IMR-90 (cell line): ENCODE measurements at regions of chrX and their contacts with region 1.

Region 1: DNA sequence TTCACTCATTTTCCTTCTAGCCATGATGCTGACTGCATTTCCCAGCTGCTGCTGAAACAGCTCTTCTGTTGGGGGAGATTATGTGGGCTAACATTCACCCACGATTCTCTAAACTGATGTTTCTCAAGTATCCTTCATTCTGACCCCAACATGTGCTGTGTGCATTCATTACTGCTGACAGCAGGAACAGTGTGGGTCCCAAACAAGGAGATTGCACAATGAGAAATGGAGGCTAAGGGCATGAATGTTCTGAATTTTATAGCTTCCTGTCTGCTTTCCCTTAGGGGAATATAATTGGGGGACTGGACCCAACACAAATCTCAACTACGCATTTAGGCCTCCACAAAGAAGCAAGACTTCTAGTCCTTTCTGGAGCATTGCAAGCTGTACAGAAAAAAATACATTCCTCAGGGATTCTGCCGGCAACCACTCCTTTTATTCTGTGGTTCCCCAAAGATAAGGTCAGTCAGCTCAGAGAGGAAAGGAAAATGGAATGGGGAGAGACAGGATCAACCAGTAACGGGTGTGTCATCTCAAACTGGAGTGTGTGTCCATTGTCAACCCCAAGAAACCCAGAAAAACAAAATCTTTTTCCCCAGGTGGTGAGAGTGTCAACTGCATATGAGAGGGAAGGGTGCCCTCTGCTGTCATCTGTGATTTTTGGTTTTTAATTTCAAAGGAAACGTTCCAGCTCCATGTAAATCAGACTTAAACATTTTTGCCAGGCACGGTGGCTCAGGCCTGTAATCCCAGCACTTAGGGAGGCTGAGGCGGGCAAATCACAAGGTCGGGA is 81.5 kb upstream of the EGFL6 start:
- DNase-seq: peak; percentile 88
- ATAC-seq: peak; percentile 77
- H3K4me3 ChIP-seq: no peak overlapping the region
- H3K27ac ChIP-seq: peak overlapping the region; percentile 97
- H3K4me1 ChIP-seq: peaks cover 2% of the 10 kb centered on the region; the same call in 1 of the 2 replicates
- H3K27me3 ChIP-seq: no peaks in the 10 kb centered on the region
- CTCF ChIP-seq: peak; percentile 77
- POLR2A ChIP-seq: no peak
- RAD21 ChIP-seq: peak; percentile 86

Region 2: GRCh38 chrX:12946838-12947544 is 540.9 kb before region 1 on chrX:
- CTCF ChIA-PET with region 1: interaction called, 21 read pairs
- POLR2A ChIA-PET with region 1: no interaction called
- dilution Hi-C with region 1: no loop called
- in situ Hi-C with region 1: no loop called
- intact Hi-C with region 1: loop called (anchors 1 kb)
- DNase-seq: peak; percentile 82
- ATAC-seq: peak; percentile 89
- H3K4me3 ChIP-seq: no peak overlapping the region
- H3K27ac ChIP-seq: peak overlapping the region; percentile 53; the same call in 1 of the 2 replicates
- H3K4me1 ChIP-seq: peaks cover 14% of the 10 kb centered on the region
- H3K27me3 ChIP-seq: no peaks in the 10 kb centered on the region
- CTCF ChIP-seq: peak; percentile 100
- POLR2A ChIP-seq: no peak
- RAD21 ChIP-seq: peak; percentile 90

Region 3: DNA sequence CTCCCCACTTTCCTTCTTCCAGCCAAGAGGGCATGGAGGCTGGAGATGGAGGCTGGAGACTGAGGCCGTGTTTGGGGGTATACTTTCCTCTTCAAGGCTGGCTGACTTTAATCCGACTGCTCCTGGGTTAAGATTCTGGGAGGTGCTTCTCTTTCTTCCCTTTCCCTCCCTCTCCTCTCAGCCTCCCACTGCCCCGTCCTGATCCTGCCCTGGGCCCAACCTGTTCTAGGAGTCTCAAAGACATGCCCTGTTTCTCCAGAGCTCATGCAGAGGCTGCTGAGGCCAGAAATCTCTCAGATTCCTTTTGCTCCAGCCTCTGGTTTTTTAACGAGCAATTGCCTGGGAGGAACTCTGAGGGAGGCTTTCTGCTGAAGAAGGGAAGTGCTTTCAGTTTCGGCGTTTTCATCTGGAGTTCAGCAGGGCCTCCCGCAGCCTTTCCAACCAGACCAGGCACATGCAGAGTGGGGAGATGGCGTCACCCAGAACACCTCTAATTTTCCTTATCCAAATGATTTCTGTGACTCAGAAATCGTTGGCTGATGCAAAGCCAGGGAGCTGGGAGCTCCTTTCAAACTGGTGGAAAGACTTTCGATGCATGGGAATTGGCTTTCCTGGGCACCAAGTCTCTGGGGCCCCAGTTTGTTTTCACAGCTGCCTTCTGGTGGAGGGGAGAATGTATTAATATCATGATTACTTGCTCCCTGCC is 409.0 kb before region 1 on chrX:
- CTCF ChIA-PET with region 1: no interaction called
- POLR2A ChIA-PET with region 1: no interaction called
- dilution Hi-C with region 1: no loop called
- in situ Hi-C with region 1: no loop called
- intact Hi-C with region 1: loop called (anchors 5 kb)
- DNase-seq: peak; percentile 81
- ATAC-seq: peak; percentile 73
- H3K4me3 ChIP-seq: no peak overlapping the region
- H3K27ac ChIP-seq: peak overlapping the region; percentile 93
- H3K4me1 ChIP-seq: peaks cover 4% of the 10 kb centered on the region
- H3K27me3 ChIP-seq: no peaks in the 10 kb centered on the region
- CTCF ChIP-seq: no peak
- POLR2A ChIP-seq: no peak
- RAD21 ChIP-seq: no peak

Region 4: DNA sequence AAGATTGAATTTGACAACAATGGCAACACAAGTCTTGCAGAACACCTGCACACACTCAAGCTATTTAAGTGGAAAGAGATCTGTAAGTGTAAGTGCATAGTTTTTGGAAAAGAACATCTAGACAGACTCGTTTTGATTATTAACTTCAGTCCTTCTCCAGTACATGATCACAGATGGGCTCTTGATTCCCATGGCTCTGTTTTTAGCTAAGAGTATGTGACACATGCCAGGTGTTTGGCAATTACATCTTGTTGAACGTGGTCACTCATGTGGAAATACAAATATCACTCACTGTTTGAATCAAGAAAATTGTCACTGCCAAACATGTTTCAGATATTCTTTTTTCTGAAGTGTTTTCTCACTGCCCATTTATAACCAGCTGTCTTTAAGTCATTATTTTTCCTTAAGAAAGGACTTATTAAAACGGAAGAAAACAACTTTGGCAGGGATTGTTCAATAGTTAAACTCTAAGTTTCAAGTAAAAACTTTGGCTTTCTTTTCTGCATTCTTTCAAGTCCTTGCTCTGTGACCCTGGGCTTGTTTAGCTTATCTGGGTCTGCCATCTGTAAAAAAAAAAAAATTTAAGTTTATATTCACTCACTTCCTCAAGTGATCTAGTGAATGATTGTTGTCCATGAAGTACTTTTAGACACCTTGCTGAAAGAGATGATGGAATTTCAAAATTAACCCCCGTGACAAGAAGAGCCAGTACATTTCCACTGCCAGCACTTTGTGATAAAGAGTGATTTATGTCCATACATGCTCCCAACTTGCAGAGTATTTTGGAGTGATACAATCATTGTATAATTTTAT is 293.4 kb before region 1 on chrX:
- CTCF ChIA-PET with region 1: no interaction called
- POLR2A ChIA-PET with region 1: no interaction called
- dilution Hi-C with region 1: no loop called
- in situ Hi-C with region 1: no loop called
- intact Hi-C with region 1: no loop called
- DNase-seq: no peak
- ATAC-seq: no peak
- H3K4me3 ChIP-seq: no peak overlapping the region
- H3K27ac ChIP-seq: no peak overlapping the region
- H3K4me1 ChIP-seq: no peaks in the 10 kb centered on the region
- H3K27me3 ChIP-seq: no peaks in the 10 kb centered on the region
- CTCF ChIP-seq: no peak
- POLR2A ChIP-seq: no peak
- RAD21 ChIP-seq: no peak

Region 5: GRCh38 chrX:13223868-13224555 is 263.9 kb before region 1 on chrX:
- CTCF ChIA-PET with region 1: interaction called, 3 read pairs
- POLR2A ChIA-PET with region 1: no interaction called
- dilution Hi-C with region 1: no loop called
- in situ Hi-C with region 1: no loop called
- intact Hi-C with region 1: loop called (anchors 10 kb)
- DNase-seq: peak; percentile 91
- ATAC-seq: peak; percentile 57
- H3K4me3 ChIP-seq: no peak overlapping the region
- H3K27ac ChIP-seq: peak overlapping the region; percentile 78
- H3K4me1 ChIP-seq: peaks cover 4% of the 10 kb centered on the region
- H3K27me3 ChIP-seq: no peaks in the 10 kb centered on the region
- CTCF ChIP-seq: no peak
- POLR2A ChIP-seq: no peak
- RAD21 ChIP-seq: no peak

Region 6: GRCh38 chrX:13376857-13377549 is 110.9 kb before region 1 on chrX:
- CTCF ChIA-PET with region 1: no interaction called
- POLR2A ChIA-PET with region 1: no interaction called
- dilution Hi-C with region 1: no loop called
- in situ Hi-C with region 1: no loop called
- intact Hi-C with region 1: loop called (anchors 1 kb)
- DNase-seq: peak; percentile 95
- ATAC-seq: peak; percentile 45
- H3K4me3 ChIP-seq: no peak overlapping the region
- H3K27ac ChIP-seq: peak overlapping the region; percentile 97
- H3K4me1 ChIP-seq: peaks cover 15% of the 10 kb centered on the region
- H3K27me3 ChIP-seq: no peaks in the 10 kb centered on the region
- CTCF ChIP-seq: no peak
- POLR2A ChIP-seq: no peak
- RAD21 ChIP-seq: no peak

Region 7: GRCh38 chrX:13520936-13521335 is 33.0 kb after region 1 on chrX:
- CTCF ChIA-PET with region 1: no interaction called
- POLR2A ChIA-PET with region 1: no interaction called
- dilution Hi-C with region 1: no loop called
- in situ Hi-C with region 1: no loop called
- intact Hi-C with region 1: no loop called
- DNase-seq: no peak
- ATAC-seq: no peak
- H3K4me3 ChIP-seq: no peak overlapping the region
- H3K27ac ChIP-seq: no peak overlapping the region
- H3K4me1 ChIP-seq: no peaks in the 10 kb centered on the region
- H3K27me3 ChIP-seq: peaks cover 5% of the 10 kb centered on the region
- CTCF ChIP-seq: no peak
- POLR2A ChIP-seq: no peak
- RAD21 ChIP-seq: no peak